Posterior vena cava (tissue), 2 donors: ENCODE measurements at regions of chr12 and their contacts with region 1.

Region 1: GRCh38 chr12:122752464-122753318 is at the start of gene DENR:
- DNase-seq: peak; percentile 100
- total RNA-seq, gene DENR: 32.6 to 32.8 TPM

Region 2: GRCh38 chr12:122635471-122635870 is 117.2 kb before region 1 on chr12:
- intact Hi-C with region 1: loop called in 1 of 2 experiments (anchors 5 kb)
- DNase-seq: no peak

Region 3: GRCh38 chr12:122646517-122647217 is 106.0 kb before region 1 on chr12:
- intact Hi-C with region 1: loop called in 1 of 2 experiments (anchors 1 kb)
- DNase-seq: no peak

Region 4: DNA sequence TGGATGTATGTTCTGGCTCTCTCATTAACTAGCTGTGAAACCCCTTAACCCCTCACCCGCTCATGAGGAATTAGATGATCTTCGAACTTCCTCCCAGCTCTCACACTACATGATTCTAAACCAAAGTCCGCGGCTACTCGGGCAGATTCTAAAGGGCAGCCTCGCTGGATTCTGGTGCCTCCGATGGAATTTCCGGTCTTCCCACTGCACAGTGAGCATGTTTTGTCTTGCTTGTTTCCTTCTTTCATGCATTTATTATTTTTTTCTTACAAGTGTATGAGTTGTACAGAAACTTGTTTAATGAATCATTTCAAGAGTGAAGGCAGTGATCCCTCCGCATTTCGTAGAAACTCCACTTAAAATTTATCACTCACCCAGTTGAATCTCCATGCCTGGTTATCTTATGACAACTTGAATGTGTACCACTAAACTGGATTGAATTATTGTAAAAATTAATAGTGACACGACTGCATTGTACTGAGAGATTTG is 31.6 kb before region 1 on chr12:
- intact Hi-C with region 1: no loop called
- DNase-seq: peak; percentile 25

Region 5: DNA sequence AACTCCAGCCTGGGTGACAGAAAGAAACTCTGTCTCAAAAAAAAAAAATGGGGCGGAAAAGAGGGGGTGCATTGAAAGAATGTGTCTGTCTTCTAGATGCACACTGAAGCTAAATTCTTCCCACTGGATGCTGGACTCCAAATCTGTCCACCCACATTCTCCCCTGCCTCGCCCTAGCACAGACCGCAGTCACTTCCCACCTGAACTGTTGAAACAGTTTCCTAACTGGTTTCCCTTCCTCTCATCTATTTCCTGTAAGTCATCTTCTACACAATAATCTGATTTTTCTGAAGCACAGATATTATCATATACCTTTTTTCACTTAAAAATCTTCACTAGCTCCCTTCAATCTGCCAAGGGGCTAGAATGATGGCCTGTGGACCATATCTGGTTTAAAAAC is 20.5 kb before region 1 on chr12:
- intact Hi-C with region 1: no loop called
- DNase-seq: peak; percentile 7